Activated CD8-positive, alpha-beta T cell treated with anti-CD3 and anti-CD28 coated beads for 36 hours (primary cell): ENCODE measurements at regions of chr1 and their contacts with region 1.

Region 1: GRCh38 chr1:150813058-150813707 is 5.1 kb upstream of the CTSK start:
- DNase-seq: peak; percentile 26
- ATAC-seq: peak; percentile 53
- H3K4me3 Mint-ChIP-seq: no peak overlapping the region
- H3K27ac Mint-ChIP-seq: no peak overlapping the region
- H3K4me1 Mint-ChIP-seq: peaks cover under 1% of the 10 kb centered on the region
- H3K27me3 Mint-ChIP-seq: no peaks in the 10 kb centered on the region
- CTCF ChIP-seq: no peak

Region 2: DNA sequence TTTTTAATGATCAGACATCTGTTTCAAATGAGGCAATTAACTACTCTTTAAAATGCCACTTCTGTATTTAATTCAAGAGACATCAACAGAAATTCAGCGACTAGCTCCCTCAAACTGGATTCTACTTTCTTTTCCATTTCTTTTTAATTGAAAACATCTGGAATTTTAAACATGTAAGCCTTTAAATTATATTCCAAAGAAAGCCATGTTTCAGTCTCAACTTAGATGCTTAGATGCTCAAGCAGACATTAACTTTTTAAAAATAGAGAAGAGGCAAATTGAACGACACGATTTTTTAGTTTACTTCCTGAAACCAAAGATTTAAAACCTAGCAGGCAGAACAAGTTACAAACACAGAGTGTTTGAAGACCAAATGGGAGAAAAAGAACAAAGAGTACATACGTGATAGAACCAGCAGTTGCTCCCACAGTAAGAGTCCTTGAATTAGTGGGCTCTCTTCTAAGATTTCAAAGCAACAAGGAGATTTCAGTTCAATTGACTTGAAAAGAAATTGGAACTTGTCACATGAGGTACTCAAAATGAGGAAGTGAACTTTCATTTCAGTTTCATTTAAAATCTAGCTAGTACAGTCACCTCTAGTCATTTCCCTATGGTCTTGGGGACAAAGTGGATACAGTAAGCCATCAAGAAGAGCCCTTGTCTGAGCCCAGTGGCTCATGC is 47.7 kb before region 1 on chr1 and contains the start of gene CTSS:
- CTCF ChIA-PET with region 1: no interaction called
- POLR2A ChIA-PET with region 1: no interaction called
- intact Hi-C with region 1: loop called (anchors 10 kb)
- DNase-seq: no peak
- ATAC-seq: peak; percentile 91
- H3K4me3 Mint-ChIP-seq: peak within 1 kb of the TSS; percentile 90
- H3K27ac Mint-ChIP-seq: peak within 1 kb of the TSS; percentile 95
- H3K4me1 Mint-ChIP-seq: peaks cover 34% of the 10 kb centered on the region
- H3K27me3 Mint-ChIP-seq: no peaks in the 10 kb centered on the region
- CTCF ChIP-seq: no peak
- total RNA-seq, gene CTSS: 36.7 to 38.4 TPM

Region 3: DNA sequence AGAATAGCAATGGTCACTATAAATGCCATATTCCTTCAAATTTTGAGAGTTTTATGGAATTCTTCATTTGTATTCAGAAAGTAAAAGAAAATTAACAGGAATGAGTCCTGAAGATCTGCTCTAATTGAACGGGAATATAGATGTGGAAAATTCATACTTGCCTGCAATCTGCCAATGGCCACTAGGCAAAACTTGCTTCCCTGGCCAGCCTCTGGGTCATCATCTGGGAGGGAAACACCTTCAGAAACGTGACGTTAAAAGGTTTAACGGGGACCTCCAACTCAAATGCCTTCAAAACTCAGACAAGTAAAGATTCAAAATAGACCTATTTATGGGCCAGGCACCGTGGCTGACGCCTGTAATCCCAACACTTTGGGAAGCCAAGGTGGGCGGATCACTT is 16.6 kb after region 1 on chr1:
- CTCF ChIA-PET with region 1: no interaction called
- POLR2A ChIA-PET with region 1: no interaction called
- intact Hi-C with region 1: no loop called
- DNase-seq: no peak
- ATAC-seq: no peak
- H3K4me3 Mint-ChIP-seq: no peak overlapping the region
- H3K27ac Mint-ChIP-seq: no peak overlapping the region
- H3K4me1 Mint-ChIP-seq: no peaks in the 10 kb centered on the region
- H3K27me3 Mint-ChIP-seq: no peaks in the 10 kb centered on the region
- CTCF ChIP-seq: no peak